Aorta (tissue), 5 donors: ENCODE measurements at regions of chr10 and their contacts with region 1.

Region 1: GRCh38 chr10:12541446-12542067 is 192.2 kb downstream of the CAMK1D start:
- DNase-seq: no peak
- ATAC-seq: no peak
- H3K4me3 ChIP-seq: no peak overlapping the region
- H3K27ac ChIP-seq: no peak overlapping the region
- H3K4me1 ChIP-seq: no peaks in the 10 kb centered on the region
- H3K27me3 ChIP-seq: no peaks in the 10 kb centered on the region

Region 2: DNA sequence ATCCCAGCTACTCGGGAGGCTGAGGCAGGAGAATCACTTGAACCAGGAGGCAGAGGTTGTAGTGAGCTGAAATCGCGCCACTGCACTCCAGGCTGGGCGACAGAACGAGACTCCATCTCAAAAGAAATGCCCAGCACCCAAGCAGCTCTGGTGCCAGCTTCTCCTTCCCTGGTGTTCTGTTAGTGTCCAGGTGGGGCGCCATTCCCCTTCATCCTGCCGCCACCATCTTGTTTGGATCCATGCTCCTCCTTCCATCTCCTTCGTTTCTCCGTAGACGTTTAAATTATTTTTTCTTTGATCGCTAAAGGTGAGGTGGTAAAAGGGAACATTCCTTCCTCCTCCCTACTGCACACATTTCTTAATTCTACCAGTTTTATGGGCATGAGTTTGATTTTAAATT is 688.1 kb before region 1 on chr10:
- intact Hi-C with region 1: no loop called
- DNase-seq: no peak
- ATAC-seq: no peak
- H3K4me3 ChIP-seq: no peak overlapping the region
- H3K27ac ChIP-seq: no peak overlapping the region
- H3K4me1 ChIP-seq: no peaks in the 10 kb centered on the region
- H3K27me3 ChIP-seq: no peaks in the 10 kb centered on the region

Region 3: GRCh38 chr10:12513775-12514673 is 27.5 kb before region 1 on chr10:
- intact Hi-C with region 1: loop called in 1 of 2 experiments (anchors 2 kb)
- DNase-seq: no peak
- ATAC-seq: no peak
- H3K4me3 ChIP-seq: no peak overlapping the region
- H3K27ac ChIP-seq: no peak overlapping the region
- H3K4me1 ChIP-seq: no peaks in the 10 kb centered on the region
- H3K27me3 ChIP-seq: no peaks in the 10 kb centered on the region